ENCODE measurements at regions of chr10 and their contacts with region 1.

Region 1: GRCh38 chr10:67849331-67850011 is 11.5 kb upstream of the DNAJC12 start:
- DNase-seq: peak; percentile 83 to 88
- H3K4me3 ChIP-seq: peak overlapping the region; percentile 70 to 75 (median 74)
- H3K27ac ChIP-seq: peak overlapping the region; percentile 90
- H3K4me1 ChIP-seq: no peaks in the 10 kb centered on the region
- H3K27me3 ChIP-seq: no peaks in the 10 kb centered on the region
- CTCF ChIP-seq: no peak
- POLR2A ChIP-seq: peak; percentile 77

Region 2: DNA sequence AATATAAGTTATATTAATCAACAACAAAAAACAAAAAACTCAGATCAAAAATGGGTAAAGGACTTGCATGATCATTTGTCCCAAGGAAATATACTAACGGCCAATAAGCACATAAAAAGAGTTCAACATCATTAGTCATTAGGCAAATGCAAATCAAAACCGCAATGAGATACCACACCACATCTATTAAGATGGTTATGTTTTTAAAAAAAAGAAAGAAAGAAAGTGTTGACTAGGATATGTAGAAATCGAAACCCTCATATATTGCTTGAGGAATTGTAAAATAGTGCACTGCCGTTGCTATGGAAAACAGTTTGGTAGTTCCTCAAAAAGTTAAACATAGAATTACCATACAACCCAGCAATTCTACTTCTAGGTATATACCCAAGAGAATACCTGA is 114.0 kb before region 1 on chr10:
- intact Hi-C with region 1: loop called (anchors 5 kb)
- DNase-seq: no peak
- H3K4me3 ChIP-seq: no peak overlapping the region
- H3K27ac ChIP-seq: no peak overlapping the region
- H3K4me1 ChIP-seq: no peaks in the 10 kb centered on the region
- H3K27me3 ChIP-seq: no peaks in the 10 kb centered on the region
- CTCF ChIP-seq: no peak
- POLR2A ChIP-seq: no peak

Region 3: GRCh38 chr10:67884313-67884841 is 34.9 kb after region 1 on chr10 and contains the start of gene SIRT1:
- intact Hi-C with region 1: loop called (anchors 2 kb)
- DNase-seq: peak; percentile 89 to 96
- H3K4me3 ChIP-seq: peak within 1 kb of the TSS; percentile 71 to 87 (median 82)
- H3K27ac ChIP-seq: peak within 1 kb of the TSS; percentile 97 to 98
- H3K4me1 ChIP-seq: no peaks in the 10 kb centered on the region
- H3K27me3 ChIP-seq: no peaks in the 10 kb centered on the region
- CTCF ChIP-seq: peak in 2 of 3 donors; percentile 9 to 13
- POLR2A ChIP-seq: peak; percentile 81
- total RNA-seq, gene SIRT1: 21.0 to 43.3 (median 35.5) TPM

Region 4: DNA sequence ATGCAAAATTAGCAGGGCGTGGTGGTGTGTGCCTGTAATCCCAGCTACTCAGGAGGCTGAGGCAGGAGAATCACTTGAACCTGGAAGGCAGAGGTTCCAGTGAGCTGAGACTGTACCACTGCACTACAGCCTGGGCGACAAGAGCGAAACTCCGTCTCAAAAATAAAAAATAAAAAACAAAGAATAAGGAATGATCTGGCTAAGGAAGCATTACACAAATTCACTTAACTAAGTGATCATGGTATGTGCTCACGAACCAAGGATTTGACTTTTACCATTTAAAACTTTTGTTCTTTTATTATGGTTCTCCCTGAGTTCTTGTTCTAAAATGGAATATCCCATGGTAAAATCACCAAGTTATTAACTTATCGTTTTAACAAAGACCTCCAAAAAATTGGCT is 106.1 kb after region 1 on chr10:
- intact Hi-C with region 1: no loop called
- DNase-seq: no peak
- H3K4me3 ChIP-seq: no peak overlapping the region
- H3K27ac ChIP-seq: no peak overlapping the region
- H3K4me1 ChIP-seq: no peaks in the 10 kb centered on the region
- H3K27me3 ChIP-seq: no peaks in the 10 kb centered on the region
- CTCF ChIP-seq: no peak
- POLR2A ChIP-seq: no peak

Region 5: DNA sequence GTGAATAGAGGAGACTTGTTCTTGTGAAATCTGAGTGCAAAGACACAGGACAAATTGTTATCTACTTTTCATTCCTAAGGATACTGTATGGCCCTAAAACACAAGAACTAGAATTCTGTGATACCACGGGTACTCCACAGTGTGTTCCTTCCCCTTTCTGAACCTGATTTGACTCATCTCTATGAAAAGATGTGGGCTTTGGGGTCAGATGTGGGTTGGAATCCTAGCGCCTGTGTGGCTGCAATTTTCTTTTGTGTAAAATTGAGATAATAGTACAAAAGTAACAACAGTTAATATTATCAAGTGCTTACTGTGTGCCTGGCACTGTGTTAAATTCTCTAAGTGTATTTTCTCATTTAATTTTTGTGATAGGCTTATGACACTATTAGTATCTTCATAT is 1246.6 kb after region 1 on chr10:
- intact Hi-C with region 1: loop called (anchors 5 kb)
- DNase-seq: no peak
- H3K4me3 ChIP-seq: no peak overlapping the region
- H3K27ac ChIP-seq: no peak overlapping the region
- H3K4me1 ChIP-seq: no peaks in the 10 kb centered on the region
- H3K27me3 ChIP-seq: no peaks in the 10 kb centered on the region
- CTCF ChIP-seq: no peak
- POLR2A ChIP-seq: no peak

Measured in breast epithelium (tissue), 4 donors.